ENCODE measurements at regions of chr5 and their contacts with region 1.

Region 1: GRCh38 chr5:151239237-151239861 is 13.6 kb upstream of the GM2A start:
- DNase-seq: peak; percentile 63
- ATAC-seq: peak; percentile 99
- H3K4me3 ChIP-seq: no peak overlapping the region
- H3K27ac ChIP-seq: no peak overlapping the region
- H3K4me1 ChIP-seq: peaks cover 2% of the 10 kb centered on the region; the same call in 1 of the 2 replicates
- H3K27me3 ChIP-seq: peaks cover 18% of the 10 kb centered on the region
- CTCF ChIP-seq: peak; percentile 93
- POLR2A ChIP-seq: no peak
- RAD21 ChIP-seq: peak; percentile 81

Region 2: DNA sequence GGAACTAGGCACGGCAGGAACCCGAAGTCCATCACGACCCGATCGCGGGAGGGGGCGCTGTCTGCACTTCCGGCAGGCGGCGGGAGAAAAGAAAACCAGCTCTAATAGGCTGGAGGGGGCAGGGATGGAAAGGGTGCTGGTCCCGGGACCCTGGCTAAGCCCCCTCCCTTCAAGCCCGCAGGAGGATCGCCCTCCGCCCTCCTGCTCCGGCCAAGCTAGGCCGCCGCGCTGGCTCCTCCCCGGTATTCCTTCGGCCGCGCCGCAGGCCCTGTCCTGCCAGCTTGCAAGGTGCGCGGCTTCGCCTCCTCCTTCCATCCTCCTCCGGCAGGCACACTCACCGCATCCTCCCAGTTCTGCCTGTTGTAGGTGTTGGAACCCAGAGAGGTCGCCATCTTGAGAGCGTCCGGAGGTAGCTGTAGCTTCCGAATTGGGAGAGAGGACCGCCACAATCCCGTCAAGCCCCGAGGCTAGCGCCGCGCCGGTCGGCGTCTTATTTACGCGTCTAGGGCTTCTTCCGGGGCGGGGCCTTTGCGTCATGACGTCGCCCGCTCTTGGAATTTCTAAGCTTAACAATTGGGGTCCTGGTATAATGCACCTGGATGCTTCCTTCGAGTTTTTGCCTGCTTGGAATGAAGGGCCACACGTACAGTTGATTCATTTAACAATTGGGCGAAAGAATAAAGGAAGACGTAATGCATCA is 538.6 kb before region 1 on chr5 and contains the start of gene RBM22:
- CTCF ChIA-PET with region 1: no interaction called
- POLR2A ChIA-PET with region 1: no interaction called
- dilution Hi-C with region 1: no loop called
- in situ Hi-C with region 1: no loop called
- intact Hi-C with region 1: no loop called
- DNase-seq: peak; percentile 83
- ATAC-seq: peak; percentile 98
- H3K4me3 ChIP-seq: peak within 1 kb of the TSS; percentile 81
- H3K27ac ChIP-seq: peak within 1 kb of the TSS; percentile 94
- H3K4me1 ChIP-seq: peaks cover 3% of the 10 kb centered on the region
- H3K27me3 ChIP-seq: no peaks in the 10 kb centered on the region
- CTCF ChIP-seq: peak; percentile 60
- POLR2A ChIP-seq: peak; percentile 80
- RAD21 ChIP-seq: peak; percentile 10; the same call in 1 of the 2 replicates
- total RNA-seq, gene RBM22: 26.2 and 33.1 TPM in 2 replicates

Region 3: DNA sequence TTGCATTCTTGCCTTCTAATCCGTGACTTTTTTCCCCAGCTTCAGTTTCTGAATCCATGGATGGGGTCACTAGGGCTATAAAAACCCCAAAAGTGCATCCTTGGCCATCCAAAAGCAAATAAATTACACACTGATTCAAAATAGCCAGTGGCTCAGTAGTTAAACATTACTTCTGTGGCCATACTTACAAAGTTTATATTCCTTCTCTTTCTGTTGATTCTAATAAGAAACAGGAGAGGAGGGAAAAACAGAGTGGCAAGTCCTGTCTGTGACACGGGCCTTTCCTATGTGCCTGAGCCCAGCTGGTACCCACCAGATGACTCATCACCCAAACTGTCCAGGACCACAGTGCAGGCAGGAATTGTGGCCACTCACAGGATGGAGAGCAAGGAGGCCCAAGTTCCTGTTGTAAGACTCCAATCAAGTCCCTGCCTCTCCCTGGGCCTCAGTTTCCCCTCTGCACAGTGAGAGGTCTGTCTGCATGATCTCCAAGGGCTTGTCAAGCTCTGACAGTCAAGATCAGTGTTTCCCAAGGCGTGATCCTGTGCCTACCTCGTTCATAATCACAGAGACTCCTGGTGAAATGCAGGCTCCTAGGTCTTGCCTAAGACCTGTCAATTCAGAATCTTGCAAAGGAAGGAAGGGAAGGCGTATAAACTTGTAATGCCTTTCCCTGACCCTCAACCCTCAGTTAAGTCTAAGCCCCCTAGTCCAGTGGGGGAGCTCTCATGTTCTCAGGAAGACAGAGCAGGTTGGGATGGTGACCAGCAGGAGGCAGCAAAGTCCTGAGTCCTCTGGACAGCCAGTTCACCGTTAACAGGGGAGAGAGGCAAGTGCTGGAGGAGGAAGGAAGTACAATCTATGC is 188.1 kb before region 1 on chr5:
- CTCF ChIA-PET with region 1: no interaction called
- POLR2A ChIA-PET with region 1: no interaction called
- dilution Hi-C with region 1: no loop called
- in situ Hi-C with region 1: no loop called
- intact Hi-C with region 1: loop called (anchors 2 kb)
- DNase-seq: peak; percentile 75
- ATAC-seq: peak; percentile 96
- H3K4me3 ChIP-seq: no peak overlapping the region
- H3K27ac ChIP-seq: no peak overlapping the region
- H3K4me1 ChIP-seq: peaks cover 6% of the 10 kb centered on the region; the same call in 1 of the 2 replicates
- H3K27me3 ChIP-seq: no peaks in the 10 kb centered on the region
- CTCF ChIP-seq: peak; percentile 91
- POLR2A ChIP-seq: no peak
- RAD21 ChIP-seq: peak; percentile 94

Region 4: DNA sequence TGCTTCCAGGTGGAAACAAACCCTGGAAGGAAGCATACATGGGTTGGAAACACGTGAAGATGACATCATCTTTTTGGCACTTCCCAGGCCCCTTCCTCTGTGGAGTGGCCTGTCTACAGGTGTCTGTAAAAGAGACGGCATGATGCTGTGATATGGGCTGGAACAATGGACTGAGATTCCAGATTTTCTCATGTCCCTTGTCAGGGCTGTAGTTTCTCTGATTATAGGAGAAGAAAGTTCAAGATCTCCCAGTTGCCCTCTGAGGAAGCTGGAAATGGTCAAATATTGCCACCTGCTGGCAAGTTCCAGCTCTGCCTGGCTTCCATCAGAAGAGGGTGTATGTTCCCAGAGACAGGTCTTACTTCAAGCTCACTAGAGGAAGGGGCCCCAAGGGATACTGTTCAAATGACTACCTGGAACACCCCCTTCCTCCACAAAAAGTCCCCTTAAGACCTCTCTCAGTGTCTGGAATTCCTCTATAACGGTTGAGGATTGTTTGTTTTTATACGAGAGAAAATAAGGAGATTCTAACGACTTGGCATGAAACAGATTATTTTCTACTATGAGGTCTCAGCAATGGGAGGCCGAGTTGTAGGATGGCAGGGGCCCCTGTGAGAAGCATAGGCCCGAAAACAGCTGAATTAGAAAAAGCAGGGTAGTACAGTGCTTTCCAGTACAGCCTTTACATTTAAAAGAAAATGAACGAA is 74.5 kb before region 1 on chr5:
- CTCF ChIA-PET with region 1: interaction called, 4 read pairs
- POLR2A ChIA-PET with region 1: no interaction called
- dilution Hi-C with region 1: no loop called
- in situ Hi-C with region 1: no loop called
- intact Hi-C with region 1: loop called (anchors 2 kb)
- DNase-seq: peak; percentile 76
- ATAC-seq: peak; percentile 91
- H3K4me3 ChIP-seq: no peak overlapping the region
- H3K27ac ChIP-seq: no peak overlapping the region
- H3K4me1 ChIP-seq: no peaks in the 10 kb centered on the region; the same call in 1 of the 2 replicates
- H3K27me3 ChIP-seq: peaks cover 9% of the 10 kb centered on the region; the same call in 1 of the 2 replicates
- CTCF ChIP-seq: peak; percentile 95
- POLR2A ChIP-seq: no peak
- RAD21 ChIP-seq: peak; percentile 93

Region 5: GRCh38 chr5:151183451-151184245 is 55.7 kb before region 1 on chr5:
- CTCF ChIA-PET with region 1: no interaction called
- POLR2A ChIA-PET with region 1: no interaction called
- dilution Hi-C with region 1: no loop called
- in situ Hi-C with region 1: no loop called
- intact Hi-C with region 1: no loop called
- DNase-seq: peak; percentile 19
- ATAC-seq: peak; percentile 85
- H3K4me3 ChIP-seq: no peak overlapping the region
- H3K27ac ChIP-seq: no peak overlapping the region
- H3K4me1 ChIP-seq: peaks cover 2% of the 10 kb centered on the region; the same call in 1 of the 2 replicates
- H3K27me3 ChIP-seq: peaks cover 8% of the 10 kb centered on the region
- CTCF ChIP-seq: no peak
- POLR2A ChIP-seq: no peak
- RAD21 ChIP-seq: no peak

Region 6: DNA sequence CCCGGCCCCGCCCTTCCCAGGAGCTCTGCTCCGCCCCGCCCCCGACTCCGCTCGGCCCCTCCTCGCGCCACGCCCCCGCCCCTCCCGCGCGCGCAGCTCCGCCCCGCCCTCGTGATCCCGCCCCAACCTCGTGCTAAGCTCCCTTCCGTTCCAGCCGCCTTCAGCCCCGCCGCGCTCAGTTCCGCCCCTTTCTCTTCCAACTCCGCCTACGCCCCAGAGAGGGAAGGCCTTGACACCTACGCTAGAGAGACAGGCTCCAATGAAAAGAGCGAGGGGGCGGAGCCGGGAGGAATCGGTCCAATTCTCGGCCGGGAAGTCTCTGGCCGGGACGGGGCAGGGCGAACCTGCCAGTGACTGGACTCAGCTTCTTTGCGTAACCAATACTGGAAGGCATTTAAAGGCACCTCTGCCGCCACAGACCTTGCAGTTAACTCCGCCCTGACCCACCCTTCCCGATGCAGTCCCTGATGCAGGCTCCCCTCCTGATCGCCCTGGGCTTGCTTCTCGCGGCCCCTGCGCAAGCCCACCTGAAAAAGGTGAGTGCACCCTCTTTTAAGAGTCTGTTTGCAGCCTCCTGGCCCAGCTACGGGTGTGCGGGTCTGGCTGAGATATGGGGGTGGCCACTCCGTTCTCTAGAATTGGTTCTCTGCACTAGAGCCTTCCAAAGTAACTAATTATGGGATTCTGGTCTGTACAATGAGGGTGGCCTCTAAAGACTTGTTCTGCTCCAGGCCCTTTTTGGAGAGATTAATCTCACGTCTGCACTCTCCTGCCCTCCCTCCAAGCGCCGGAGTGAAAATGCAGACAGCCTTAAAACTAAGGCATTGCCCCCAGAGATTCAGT is 13.6 kb after region 1 on chr5 and contains the start of gene GM2A:
- CTCF ChIA-PET with region 1: interaction called, 12 read pairs
- POLR2A ChIA-PET with region 1: no interaction called
- dilution Hi-C with region 1: no loop called
- in situ Hi-C with region 1: no loop called
- intact Hi-C with region 1: no loop called
- DNase-seq: peak; percentile 99
- ATAC-seq: peak; percentile 96
- H3K4me3 ChIP-seq: peak within 1 kb of the TSS; percentile 95
- H3K27ac ChIP-seq: peak within 1 kb of the TSS; percentile 31
- H3K4me1 ChIP-seq: no peaks in the 10 kb centered on the region; the same call in 1 of the 2 replicates
- H3K27me3 ChIP-seq: peaks cover 10% of the 10 kb centered on the region
- CTCF ChIP-seq: no peak
- POLR2A ChIP-seq: 0 out of 2 replicates have a peak, but pooled peaks have one; percentile 30
- RAD21 ChIP-seq: no peak
- total RNA-seq, gene GM2A: 18.5 and 18.6 TPM in 2 replicates

Region 7: GRCh38 chr5:151315998-151316597 is 76.7 kb after region 1 on chr5:
- CTCF ChIA-PET with region 1: no interaction called
- POLR2A ChIA-PET with region 1: no interaction called
- dilution Hi-C with region 1: no loop called
- in situ Hi-C with region 1: no loop called
- intact Hi-C with region 1: no loop called
- DNase-seq: peak; percentile 63
- ATAC-seq: peak; percentile 95
- H3K4me3 ChIP-seq: no peak overlapping the region
- H3K27ac ChIP-seq: no peak overlapping the region
- H3K4me1 ChIP-seq: no peaks in the 10 kb centered on the region
- H3K27me3 ChIP-seq: no peaks in the 10 kb centered on the region
- CTCF ChIP-seq: peak; percentile 81
- POLR2A ChIP-seq: no peak
- RAD21 ChIP-seq: peak; percentile 63

Region 8: GRCh38 chr5:151328734-151329133 is 89.4 kb after region 1 on chr5:
- CTCF ChIA-PET with region 1: no interaction called
- POLR2A ChIA-PET with region 1: no interaction called
- dilution Hi-C with region 1: no loop called
- in situ Hi-C with region 1: no loop called
- intact Hi-C with region 1: no loop called
- DNase-seq: no peak
- ATAC-seq: no peak
- H3K4me3 ChIP-seq: no peak overlapping the region
- H3K27ac ChIP-seq: no peak overlapping the region
- H3K4me1 ChIP-seq: no peaks in the 10 kb centered on the region
- H3K27me3 ChIP-seq: no peaks in the 10 kb centered on the region
- CTCF ChIP-seq: no peak
- POLR2A ChIP-seq: no peak
- RAD21 ChIP-seq: no peak